ENCODE measurements at regions of chr19 and their contacts with region 1.

Region 1: DNA sequence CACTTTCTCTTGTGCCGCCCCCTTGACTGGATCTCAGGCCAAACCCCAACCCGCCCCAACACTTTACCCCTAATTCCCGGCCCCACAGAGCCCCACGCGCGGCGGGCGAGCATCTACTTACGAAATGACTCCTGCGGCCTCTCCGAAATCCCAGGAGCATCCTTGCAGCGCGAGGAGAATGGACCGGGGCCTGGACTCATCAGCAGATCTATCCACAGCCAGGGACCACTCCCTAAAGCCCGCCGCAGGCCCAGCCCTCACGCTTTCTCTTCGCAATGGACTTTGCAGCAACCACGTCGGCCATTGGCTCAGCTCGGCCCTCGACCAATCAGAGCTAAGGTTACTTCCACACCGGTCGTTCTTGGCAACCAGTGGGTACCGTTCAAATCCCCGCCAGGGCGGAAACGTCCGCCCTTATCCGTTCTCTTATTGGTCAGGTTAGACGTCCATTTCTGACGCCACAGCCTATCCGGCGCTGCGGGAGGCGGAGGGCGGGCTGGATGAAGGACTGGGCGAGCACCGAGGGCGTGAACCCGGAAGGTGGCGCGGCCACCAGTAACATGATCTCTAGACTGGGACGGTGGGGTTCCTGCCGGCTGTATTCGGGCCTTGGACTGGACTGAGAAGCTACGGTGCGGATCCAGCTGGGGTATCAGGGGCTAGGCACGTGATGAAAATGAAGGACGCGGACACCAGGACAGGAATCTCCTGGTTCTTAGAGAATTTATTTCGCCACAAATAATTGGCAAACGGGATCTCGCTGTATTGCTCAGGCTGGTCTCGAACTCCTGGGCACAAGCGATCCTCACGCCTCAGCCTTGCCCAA is at the starts of genes CEP89 and FAAP24:
- DNase-seq: peak; percentile 100
- ATAC-seq: peak; percentile 96 to 98
- H3K4me3 ChIP-seq: peak within 1 kb of the TSS; percentile 60
- H3K27ac ChIP-seq: peak within 1 kb of the TSS; percentile 75 to 89
- H3K4me1 ChIP-seq: peaks cover 19% of the 10 kb centered on the region
- CTCF ChIP-seq: no peak
- EP300 ChIP-seq: 0 out of 5 replicates have a peak, but pooled peaks of 1 of the 2 experiments have one; percentile 34
- POLR2A ChIP-seq: peak; percentile 88
- RAD21 ChIP-seq: peak in 1 of 2 experiments; percentile 18; a peak in 1 of 5 replicates
- polyA plus RNA-seq, gene CEP89: 31.5 and 45.3 TPM in 2 replicates
- polyA plus RNA-seq, gene FAAP24: 14.4 and 15.9 TPM in 2 replicates

Region 2: DNA sequence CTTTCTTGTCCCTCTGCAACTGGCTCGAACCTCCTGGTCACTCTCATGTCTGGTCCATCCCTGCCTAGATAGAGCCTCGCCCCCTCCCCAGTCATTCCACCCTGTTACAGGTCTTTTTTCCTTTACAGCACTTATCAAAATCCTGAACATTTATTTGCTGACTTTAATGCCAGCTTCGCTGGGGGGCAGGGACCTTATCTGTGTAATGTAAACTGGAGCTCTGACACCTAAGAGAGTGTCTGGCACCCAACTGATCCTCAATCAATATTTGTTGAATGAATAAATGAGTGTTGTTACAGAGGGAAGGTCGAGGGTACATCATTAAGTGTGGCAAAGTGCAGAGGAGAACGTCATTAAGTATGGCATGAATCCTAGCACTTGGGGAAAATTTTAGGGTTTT is 16.8 kb after region 1 on chr19:
- CTCF ChIA-PET with region 1: interaction called, 35 read pairs
- POLR2A ChIA-PET with region 1: interaction called, 7 read pairs
- DNase-seq: no peak
- ATAC-seq: no peak
- H3K4me3 ChIP-seq: no peak overlapping the region
- H3K27ac ChIP-seq: no peak overlapping the region
- H3K4me1 ChIP-seq: no peaks in the 10 kb centered on the region
- CTCF ChIP-seq: no peak
- EP300 ChIP-seq: no peak
- POLR2A ChIP-seq: no peak
- RAD21 ChIP-seq: no peak

Region 3: DNA sequence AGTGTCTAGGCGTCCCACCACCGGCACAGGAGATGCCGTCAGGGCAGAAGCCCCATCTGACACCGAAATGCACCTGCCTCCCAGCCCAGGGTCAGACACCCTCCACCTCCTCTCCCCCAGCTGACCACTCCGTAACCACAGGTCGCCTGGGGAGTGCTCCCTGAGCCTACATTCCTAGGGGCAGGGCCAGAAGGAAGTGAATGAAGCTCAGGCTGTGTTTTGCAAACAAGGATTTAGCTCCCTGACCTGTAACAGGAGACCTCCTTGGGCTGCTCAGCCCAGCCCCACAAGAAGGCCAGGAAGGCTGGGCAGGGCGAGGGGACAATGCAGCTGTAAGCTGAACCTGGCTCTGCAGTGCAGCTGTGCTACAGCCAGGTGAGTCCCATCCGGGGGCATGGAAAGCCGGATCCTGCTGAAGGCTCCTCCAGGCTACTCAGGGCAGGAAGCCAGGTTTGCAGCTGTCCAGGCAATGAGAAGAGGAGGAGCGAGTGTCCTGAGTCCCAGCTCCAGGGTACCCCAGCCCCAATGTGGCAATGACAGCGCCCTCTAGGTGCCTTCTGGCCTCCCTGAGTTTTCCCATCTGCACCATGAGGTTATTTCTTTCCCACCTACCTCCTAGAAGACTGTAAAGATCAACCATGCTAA is 50.7 kb after region 1 on chr19:
- CTCF ChIA-PET with region 1: interaction called, 11 read pairs
- POLR2A ChIA-PET with region 1: no interaction called
- DNase-seq: no peak
- ATAC-seq: peak; percentile 30 to 41; a peak in 4 of 6 replicates
- H3K4me3 ChIP-seq: no peak overlapping the region
- H3K27ac ChIP-seq: 0 out of 6 replicates have a peak overlapping the region, but pooled peaks of 1 of the 2 experiments have one; percentile 6
- H3K4me1 ChIP-seq: peaks cover 31% of the 10 kb centered on the region
- CTCF ChIP-seq: peak; percentile 39
- EP300 ChIP-seq: no peak
- POLR2A ChIP-seq: no peak
- RAD21 ChIP-seq: no peak

Region 4: DNA sequence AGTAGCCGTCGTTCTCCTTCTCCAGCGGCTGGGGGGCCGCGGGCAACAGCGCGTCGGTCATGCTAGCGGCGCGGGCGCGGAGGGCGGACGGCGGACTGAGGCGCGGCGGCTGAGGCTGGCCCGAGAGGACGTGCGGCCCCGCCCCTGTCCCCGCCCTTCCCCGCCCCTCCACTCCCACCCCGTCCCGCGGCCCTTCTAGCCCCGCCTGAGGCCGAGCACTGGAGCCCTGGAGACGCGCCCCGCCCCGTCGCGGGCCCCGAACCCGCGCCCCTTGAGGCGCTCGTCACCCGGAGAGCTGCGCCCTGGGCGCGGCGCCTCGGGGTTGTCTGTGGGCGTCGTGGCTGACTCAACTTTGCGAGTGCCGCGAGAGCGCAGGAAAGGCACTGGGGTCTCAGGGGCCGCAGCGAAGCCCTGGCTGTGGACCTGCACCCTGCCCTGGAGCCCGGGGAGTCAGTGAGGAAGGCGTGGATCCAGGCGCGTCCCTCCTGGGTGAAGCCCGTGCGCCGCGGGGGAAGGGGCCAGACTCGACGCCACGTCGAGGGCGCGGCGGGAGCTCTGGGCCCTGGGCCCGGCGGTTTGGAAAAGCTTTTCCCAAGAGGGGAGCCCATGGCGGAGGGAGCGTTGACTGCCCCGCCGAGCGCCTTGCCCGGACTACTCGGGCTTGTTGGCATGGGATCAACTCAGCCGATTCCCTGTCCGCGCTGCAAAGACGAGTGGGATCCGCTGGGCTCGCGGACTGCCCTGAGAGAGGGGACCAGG is 93.0 kb after region 1 on chr19 and contains the start of gene RHPN2:
- CTCF ChIA-PET with region 1: interaction called, 19 read pairs
- POLR2A ChIA-PET with region 1: interaction called, 5 read pairs
- DNase-seq: peak; percentile 93 to 94
- ATAC-seq: peak; percentile 85 to 91
- H3K4me3 ChIP-seq: peak within 1 kb of the TSS; percentile 84
- H3K27ac ChIP-seq: peak within 1 kb of the TSS; percentile 90 to 93
- H3K4me1 ChIP-seq: peaks cover 61% of the 10 kb centered on the region
- CTCF ChIP-seq: no peak
- EP300 ChIP-seq: no peak
- POLR2A ChIP-seq: peak; percentile 90
- RAD21 ChIP-seq: peak in 1 of 2 experiments; percentile 50; a peak in 3 of 5 replicates
- polyA plus RNA-seq, gene RHPN2: 140 and 162 TPM in 2 replicates

Region 5: DNA sequence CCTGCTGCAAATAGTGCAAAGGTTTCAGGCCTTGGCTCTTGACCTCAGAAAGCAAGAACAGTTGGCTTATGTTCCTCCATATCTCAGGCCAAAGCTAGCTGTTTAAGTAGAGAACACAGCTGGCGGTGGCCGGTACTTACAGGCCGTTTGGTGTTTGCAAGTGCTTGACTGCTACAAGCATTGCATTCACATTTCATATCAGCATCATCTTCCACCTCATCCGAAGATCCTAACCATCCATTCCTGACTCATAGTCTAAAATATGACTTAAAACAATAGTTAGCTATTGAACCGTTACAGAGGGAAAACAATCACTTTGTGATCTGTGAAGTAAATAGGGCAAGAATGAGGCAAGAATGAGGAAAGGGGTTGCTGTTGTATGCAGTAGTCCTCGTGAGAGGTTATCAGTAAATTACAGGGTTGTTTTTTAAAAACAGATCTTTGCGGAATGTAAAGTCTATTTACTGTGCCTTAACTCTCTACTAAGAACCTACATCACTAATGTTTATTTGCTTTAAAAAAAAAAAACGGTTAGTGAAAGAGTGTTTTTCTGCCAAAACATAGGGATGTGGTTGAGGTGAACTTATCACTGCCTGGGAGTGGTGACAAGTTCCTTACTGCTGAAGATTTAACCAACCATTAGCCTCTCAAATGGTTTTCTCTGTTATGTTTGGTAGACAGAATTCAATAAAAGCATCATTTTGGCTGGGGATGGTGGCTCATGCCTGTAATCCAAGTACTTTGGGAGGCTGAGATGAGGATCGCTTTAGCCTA is 138.4 kb after region 1 on chr19:
- CTCF ChIA-PET with region 1: interaction called, 349 read pairs
- POLR2A ChIA-PET with region 1: no interaction called
- DNase-seq: peak in 1 of 2 experiments; percentile 39
- ATAC-seq: peak in 1 of 2 experiments; percentile 23; a peak in 2 of 6 replicates
- H3K4me3 ChIP-seq: no peak overlapping the region
- H3K27ac ChIP-seq: no peak overlapping the region
- H3K4me1 ChIP-seq: no peaks in the 10 kb centered on the region
- CTCF ChIP-seq: no peak
- EP300 ChIP-seq: no peak
- POLR2A ChIP-seq: no peak
- RAD21 ChIP-seq: no peak

Region 6: GRCh38 chr19:33132425-33132824 is 160.5 kb after region 1 on chr19:
- CTCF ChIA-PET with region 1: interaction called, 169 read pairs
- POLR2A ChIA-PET with region 1: no interaction called
- DNase-seq: peak; percentile 42 to 70
- ATAC-seq: peak; percentile 74 to 84; a peak in 5 of 6 replicates
- H3K4me3 ChIP-seq: no peak overlapping the region
- H3K27ac ChIP-seq: no peak overlapping the region
- H3K4me1 ChIP-seq: peaks cover 9% of the 10 kb centered on the region; the same call in 2 of the 3 replicates
- CTCF ChIP-seq: peak; percentile 44; the same call in 2 of the 3 replicates
- EP300 ChIP-seq: no peak
- POLR2A ChIP-seq: no peak
- RAD21 ChIP-seq: no peak

Region 7: GRCh38 chr19:33186431-33187182 is 214.7 kb after region 1 on chr19:
- CTCF ChIA-PET with region 1: interaction called, 22 read pairs
- POLR2A ChIA-PET with region 1: no interaction called
- DNase-seq: no peak
- ATAC-seq: no peak
- H3K4me3 ChIP-seq: no peak overlapping the region
- H3K27ac ChIP-seq: no peak overlapping the region
- H3K4me1 ChIP-seq: no peaks in the 10 kb centered on the region
- CTCF ChIP-seq: no peak
- EP300 ChIP-seq: no peak
- POLR2A ChIP-seq: no peak
- RAD21 ChIP-seq: no peak

Measured in A549 (cell line).